K562 (cell line): ENCODE measurements at regions of chr1 and their contacts with region 1.

Region 1: DNA sequence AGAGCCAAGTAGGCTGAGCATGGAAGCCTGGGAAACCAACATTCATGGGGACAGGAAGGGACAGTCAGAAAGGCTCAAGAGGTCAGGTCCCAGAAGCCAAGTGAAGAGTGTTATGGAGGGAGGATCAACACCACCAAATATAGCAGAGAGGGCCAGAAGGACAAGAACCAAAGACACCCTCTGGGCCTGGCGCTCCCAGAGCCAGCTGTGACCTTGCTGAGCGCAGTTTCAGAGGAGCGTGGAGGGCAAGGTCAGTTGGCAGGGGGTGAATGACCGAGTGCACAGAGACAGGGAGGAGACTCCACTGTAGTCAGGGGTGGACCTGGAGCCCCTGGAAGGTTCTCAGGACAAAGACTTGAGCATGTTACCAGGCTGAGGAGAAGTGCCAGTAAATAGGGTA is 4.4 kb upstream of the ASCL5 start:
- DNase-seq: no peak
- ATAC-seq: no peak
- H3K4me3 ChIP-seq: no peak overlapping the region
- H3K27ac ChIP-seq: no peak overlapping the region
- H3K4me1 ChIP-seq: peaks cover 0 to 3% of the 10 kb centered on the region in 2 experiments; a peak in 2 of 5 replicates
- H3K27me3 ChIP-seq: peaks cover 24 to 36% of the 10 kb centered on the region in 2 experiments
- CTCF ChIP-seq: no peak
- EP300 ChIP-seq: no peak
- POLR2A ChIP-seq: no peak
- RAD21 ChIP-seq: no peak

Region 2: DNA sequence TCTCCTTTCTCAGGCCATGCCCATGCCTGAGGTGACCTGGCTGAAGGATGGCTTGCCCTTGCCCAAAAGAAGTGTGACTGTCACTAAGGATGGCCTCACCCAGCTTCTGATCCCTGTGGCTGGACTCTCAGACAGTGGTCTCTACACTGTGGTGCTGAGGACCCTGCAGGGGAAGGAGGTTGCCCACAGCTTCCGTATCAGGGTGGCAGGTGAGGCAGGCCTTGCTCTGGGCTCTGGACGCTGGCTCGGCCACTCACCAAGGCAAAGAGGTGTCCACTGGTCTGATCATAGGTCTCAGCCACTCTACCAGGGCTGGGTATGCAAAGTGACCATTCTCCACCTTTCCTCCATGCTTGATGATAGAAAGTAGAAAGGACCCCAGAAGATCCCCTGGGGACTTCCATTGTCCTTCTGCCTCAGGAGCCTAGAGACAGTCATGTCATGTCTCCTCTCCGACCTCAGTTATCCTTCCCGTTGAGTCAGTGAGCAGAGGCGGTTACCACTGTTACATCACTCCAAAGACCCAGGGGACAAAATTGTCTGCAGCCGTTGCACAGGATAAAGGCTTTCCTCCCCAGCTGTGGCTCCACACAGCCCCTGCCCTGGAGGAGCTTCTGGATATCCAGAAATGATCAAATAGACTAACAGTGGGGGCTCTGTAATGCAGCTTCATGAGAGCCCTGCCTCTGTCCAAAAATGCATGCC is 93.4 kb after region 1 on chr1:
- CTCF ChIA-PET with region 1: interaction called, 3 read pairs
- POLR2A ChIA-PET with region 1: no interaction called
- in situ Hi-C with region 1: no loop called
- intact Hi-C with region 1: loop called (anchors 5 kb)
- DNase-seq: no peak
- ATAC-seq: no peak
- H3K4me3 ChIP-seq: no peak overlapping the region
- H3K27ac ChIP-seq: no peak overlapping the region
- H3K4me1 ChIP-seq: peaks cover 0 to 7% of the 10 kb centered on the region in 2 experiments; a peak in 1 of 5 replicates
- H3K27me3 ChIP-seq: peaks cover 46 to 67% of the 10 kb centered on the region in 2 experiments
- CTCF ChIP-seq: no peak
- EP300 ChIP-seq: no peak
- POLR2A ChIP-seq: no peak
- RAD21 ChIP-seq: no peak